ENCODE measurements at regions of chr10 and their contacts with region 1.

Region 1: GRCh38 chr10:28676968-28677887 is at the start of gene BAMBI:
- DNase-seq: peak; percentile 97
- H3K4me3 Mint-ChIP-seq: peak within 1 kb of the TSS; percentile 75
- H3K27ac Mint-ChIP-seq: peak within 1 kb of the TSS; percentile 30
- H3K4me1 Mint-ChIP-seq: peaks cover 19% of the 10 kb centered on the region
- H3K27me3 Mint-ChIP-seq: peaks cover 72% of the 10 kb centered on the region
- total RNA-seq, gene BAMBI: 0.31 and 0.44 TPM in 2 replicates

Region 2: DNA sequence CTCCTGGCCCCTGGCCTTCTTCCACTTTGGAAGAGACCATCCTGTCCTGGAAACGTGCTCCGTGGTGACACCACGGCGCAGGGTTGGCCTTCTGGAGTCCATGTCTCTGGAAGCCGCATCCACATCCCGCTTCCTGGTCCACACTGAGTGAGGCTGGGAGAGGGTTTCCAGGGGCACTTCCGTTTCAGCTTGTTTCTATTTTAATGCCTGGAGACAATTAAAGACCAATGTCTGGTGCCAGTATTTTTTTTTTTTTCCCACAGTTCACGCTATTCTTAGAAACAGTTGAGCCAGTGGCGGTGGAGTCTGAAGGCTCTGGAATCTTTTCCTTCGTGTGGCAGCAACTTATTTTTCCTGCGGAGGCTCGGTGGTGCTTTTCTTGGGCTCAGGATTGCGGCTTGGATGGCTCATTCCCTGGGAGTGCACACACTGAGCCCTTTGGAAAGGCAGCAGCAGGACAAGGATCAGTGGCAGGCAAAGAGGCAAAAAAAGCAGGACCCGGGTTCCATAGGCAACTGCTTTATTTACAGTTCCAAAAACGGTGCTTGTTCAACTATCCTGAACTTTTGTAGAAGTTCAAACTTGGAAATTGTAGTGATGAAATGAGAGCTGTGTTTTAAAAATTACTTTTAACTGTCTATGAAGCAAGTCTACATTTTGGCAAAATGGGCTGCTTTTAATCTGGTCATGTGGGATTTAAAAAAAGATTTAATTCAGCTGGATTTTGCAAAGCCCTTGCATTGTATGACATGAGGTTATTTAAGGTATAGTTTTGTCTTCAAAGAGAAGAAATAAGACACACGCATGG is 202.9 kb after region 1 on chr10:
- intact Hi-C with region 1: loop called (anchors 10 kb)
- DNase-seq: no peak
- H3K4me3 Mint-ChIP-seq: no peak overlapping the region
- H3K27ac Mint-ChIP-seq: no peak overlapping the region
- H3K4me1 Mint-ChIP-seq: no peaks in the 10 kb centered on the region
- H3K27me3 Mint-ChIP-seq: peaks cover 4% of the 10 kb centered on the region

Region 3: DNA sequence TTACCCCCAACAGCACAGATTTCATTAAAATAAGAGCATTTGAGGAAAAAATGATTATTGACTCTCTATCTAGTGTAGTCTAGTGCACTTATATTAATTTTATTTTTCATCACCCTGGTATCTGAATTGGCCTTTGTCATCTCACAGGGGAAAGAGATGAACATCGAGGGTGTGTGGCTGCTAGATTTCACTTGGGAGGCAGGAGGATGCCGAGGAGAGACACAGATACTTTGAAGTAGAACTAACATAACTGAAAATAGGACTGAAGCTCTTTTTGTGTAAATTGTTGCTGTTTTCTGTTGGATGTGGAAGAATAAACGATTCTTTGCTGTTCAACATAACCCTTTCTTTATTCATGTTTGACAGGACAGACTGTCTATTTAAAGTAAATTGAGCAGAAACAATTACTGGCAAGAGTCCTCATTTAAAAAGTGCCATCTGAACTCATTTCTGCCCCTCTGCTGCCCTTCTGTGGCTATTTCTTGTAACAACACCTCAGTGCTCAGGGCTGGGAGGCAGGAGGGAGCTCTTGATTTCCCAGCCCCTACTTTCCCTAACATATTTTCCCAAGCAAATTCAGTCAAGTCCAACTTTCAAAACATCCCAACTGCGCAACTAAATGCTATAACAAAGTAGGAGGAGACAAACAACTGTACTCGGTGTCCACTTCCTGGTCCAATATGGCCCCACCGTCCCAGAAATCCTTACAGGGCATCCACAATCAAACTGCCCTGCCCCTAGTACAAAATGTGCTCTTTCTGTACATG is 627.2 kb after region 1 on chr10:
- intact Hi-C with region 1: loop called (anchors 5 kb)
- DNase-seq: peak; percentile 73
- H3K4me3 Mint-ChIP-seq: peak overlapping the region; percentile 8
- H3K27ac Mint-ChIP-seq: no peak overlapping the region
- H3K4me1 Mint-ChIP-seq: no peaks in the 10 kb centered on the region
- H3K27me3 Mint-ChIP-seq: peaks cover 6% of the 10 kb centered on the region

Measured in activated CD4-positive, alpha-beta T cell treated with anti-CD3 and anti-CD28 coated beads, Interleukin-2, amount 10 ng/mL, durations not matched to agents 24 days and 14 days (primary cell).